ENCODE measurements at regions of chr15 and their contacts with region 1.

Region 1: DNA sequence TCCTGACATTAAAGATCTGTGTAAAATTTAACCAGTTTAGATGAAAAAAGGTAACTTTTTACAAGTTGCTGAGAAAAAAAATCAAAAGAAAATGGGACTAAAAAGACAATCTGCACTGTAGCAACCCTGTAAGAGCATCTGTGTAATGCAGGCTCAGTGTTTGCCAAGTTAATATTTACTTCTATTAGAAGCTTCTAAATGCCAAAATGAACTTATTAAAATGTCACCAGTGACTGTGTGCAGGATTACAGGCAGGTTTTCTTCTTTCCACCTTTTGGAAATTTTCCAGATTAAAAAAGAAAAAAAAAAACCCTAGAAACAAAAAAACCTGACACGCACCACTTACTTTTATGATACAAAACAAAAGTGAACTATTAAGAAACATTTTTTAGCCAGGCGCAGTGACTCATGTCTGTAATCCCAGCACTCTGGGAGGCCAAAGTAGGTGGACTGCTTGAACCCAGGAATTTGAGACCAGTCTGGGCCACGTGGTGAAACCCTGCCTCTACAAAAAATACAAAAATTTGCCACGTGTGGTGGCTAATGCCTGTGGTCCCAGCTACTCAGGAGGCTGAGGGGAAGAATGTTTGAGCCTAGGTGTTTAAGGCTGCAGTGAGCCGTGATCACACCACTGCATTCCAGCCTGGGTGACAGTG is 87.2 kb downstream of the TJP1 start:
- DNase-seq: peak; percentile 77
- ATAC-seq: peak; percentile 69
- H3K4me3 ChIP-seq: no peak overlapping the region
- H3K27ac ChIP-seq: peak overlapping the region; percentile 58
- H3K4me1 ChIP-seq: peaks cover 53% of the 10 kb centered on the region
- H3K27me3 ChIP-seq: no peaks in the 10 kb centered on the region
- CTCF ChIP-seq: no peak

Region 2: DNA sequence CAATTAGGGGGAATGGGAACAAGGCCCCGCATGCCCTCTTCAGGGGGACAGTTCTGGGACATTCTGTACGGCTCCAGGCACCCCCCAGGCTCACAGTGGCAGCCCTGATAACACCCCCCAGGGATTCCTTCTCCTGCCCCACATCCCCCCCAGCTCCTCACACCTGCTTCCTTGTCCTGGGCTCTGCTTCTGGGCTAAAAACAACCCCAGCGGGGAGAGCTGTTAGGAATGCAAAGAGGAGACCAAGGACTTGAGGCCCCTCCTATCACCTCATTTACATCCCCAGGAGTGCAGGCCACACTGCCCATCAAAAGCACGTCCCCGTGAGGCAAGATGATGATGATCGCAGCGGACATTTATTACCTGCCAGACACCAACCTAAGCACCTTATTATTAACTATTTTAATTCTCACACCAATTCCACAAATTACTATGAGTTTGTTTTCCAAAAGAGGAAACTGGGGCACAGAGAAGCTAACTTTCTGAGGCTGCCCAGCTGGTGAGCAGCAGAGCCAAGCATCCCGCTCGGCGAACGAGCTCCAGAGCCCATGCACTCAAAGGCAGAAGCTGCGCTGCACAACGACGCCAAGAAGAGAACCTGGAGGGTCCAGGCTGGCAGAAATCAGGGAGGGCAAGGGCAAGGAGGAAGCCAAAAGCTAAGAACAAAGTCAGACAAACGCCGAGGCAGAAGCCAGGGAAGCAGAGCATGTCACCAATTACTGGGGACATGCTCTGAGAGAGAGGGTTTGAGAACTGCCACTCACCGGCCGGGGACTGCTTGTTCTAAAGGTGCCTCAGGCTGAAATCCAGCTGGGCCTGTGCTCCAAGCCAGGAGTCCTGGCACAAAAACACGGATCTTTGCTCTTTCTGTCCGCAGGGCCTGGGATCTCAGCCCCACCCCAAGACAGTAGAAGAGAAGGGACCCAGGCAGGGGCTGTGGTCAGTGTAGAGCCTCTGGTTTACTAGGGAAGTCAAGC is 389.2 kb before region 1 on chr15:
- CTCF ChIA-PET with region 1: no interaction called
- POLR2A ChIA-PET with region 1: interaction called, 27 read pairs
- intact Hi-C with region 1: no loop called
- DNase-seq: no peak
- ATAC-seq: no peak
- H3K4me3 ChIP-seq: no peak overlapping the region
- H3K27ac ChIP-seq: no peak overlapping the region
- H3K4me1 ChIP-seq: no peaks in the 10 kb centered on the region
- H3K27me3 ChIP-seq: peaks cover 76% of the 10 kb centered on the region
- CTCF ChIP-seq: no peak

Region 3: DNA sequence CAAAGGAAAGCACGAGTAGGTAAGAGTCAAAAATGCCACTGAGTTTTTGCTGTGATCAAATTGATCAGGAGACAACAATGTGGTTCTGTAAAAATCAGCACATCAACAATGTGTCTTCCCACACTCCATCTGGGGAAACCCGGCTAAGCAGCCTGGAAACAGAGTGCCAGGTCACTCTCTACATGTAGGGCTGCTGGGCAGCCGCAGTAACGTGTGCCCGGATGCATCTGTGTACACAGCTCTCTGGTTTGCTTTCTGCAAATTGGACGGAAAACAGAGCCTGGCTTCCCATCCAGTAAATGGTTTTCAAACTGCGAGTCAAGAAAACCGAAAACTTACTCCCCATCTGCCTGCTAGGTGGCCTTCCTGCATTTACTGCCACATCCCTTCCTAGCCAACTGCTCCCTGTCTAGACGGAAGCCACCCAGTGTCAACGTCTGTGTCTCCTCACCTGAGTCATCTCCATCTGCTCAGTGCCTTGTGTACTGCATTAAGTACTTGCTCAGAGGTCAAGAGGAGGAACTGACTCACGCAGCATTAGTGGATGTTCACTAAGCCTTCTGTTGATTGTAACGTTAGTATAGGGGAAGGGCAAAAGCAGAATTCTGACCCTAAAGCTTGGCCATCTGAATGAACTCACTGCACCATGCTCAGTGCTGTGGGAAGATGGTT is 36.9 kb before region 1 on chr15:
- CTCF ChIA-PET with region 1: no interaction called
- POLR2A ChIA-PET with region 1: no interaction called
- intact Hi-C with region 1: loop called (anchors 1 kb)
- DNase-seq: peak; percentile 96
- ATAC-seq: peak; percentile 99
- H3K4me3 ChIP-seq: no peak overlapping the region
- H3K27ac ChIP-seq: peak overlapping the region; percentile 57
- H3K4me1 ChIP-seq: peaks cover 34% of the 10 kb centered on the region
- H3K27me3 ChIP-seq: no peaks in the 10 kb centered on the region
- CTCF ChIP-seq: no peak

Region 4: DNA sequence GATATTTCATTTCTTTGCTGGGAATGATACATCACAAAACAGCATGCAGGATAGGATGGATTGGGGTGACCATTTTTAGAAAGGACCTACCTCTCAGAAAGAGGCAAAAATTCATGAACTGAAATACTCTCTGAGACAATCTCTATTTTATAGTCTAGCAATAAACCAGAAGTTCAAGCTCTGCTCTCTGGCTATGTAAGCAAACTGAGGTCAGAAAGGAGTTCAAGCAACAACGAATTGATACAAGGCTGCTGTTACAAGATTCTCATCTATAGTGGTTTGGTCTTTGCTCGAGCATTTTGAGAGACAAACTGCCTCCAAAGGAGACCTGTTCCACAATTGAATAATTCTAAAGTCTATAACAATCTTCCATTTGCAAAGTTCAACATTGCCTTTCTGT is 263.0 kb after region 1 on chr15:
- CTCF ChIA-PET with region 1: interaction called, 10 read pairs
- POLR2A ChIA-PET with region 1: no interaction called
- intact Hi-C with region 1: no loop called
- DNase-seq: no peak
- ATAC-seq: no peak
- H3K4me3 ChIP-seq: no peak overlapping the region
- H3K27ac ChIP-seq: no peak overlapping the region
- H3K4me1 ChIP-seq: no peaks in the 10 kb centered on the region
- H3K27me3 ChIP-seq: no peaks in the 10 kb centered on the region
- CTCF ChIP-seq: no peak

Measured in PC-3 (cell line).